Heart right ventricle (tissue), 16 donors: ENCODE measurements at regions of chr5 and their contacts with region 1.

Region 1: GRCh38 chr5:54663866-54664265 is 146.3 kb downstream of the SNX18 start:
- DNase-seq: peak in 1 of 2 donors; percentile 45
- ATAC-seq: peak in 6 of 8 donors; percentile 48 to 79 (median 61)
- H3K4me3 ChIP-seq: no peak overlapping the region
- H3K27ac ChIP-seq: peak overlapping the region in 1 of 10 donors; percentile 32
- H3K4me1 ChIP-seq: peaks cover 0 to 25% (median 9%) of the 10 kb centered on the region in 9 donors
- H3K27me3 ChIP-seq: no peaks in the 10 kb centered on the region
- CTCF ChIP-seq: no peak

Region 2: GRCh38 chr5:54443270-54443669 is 220.6 kb before region 1 on chr5:
- intact Hi-C with region 1: no loop called
- DNase-seq: peak in 1 of 2 donors; percentile 18
- ATAC-seq: no peak
- H3K4me3 ChIP-seq: no peak overlapping the region
- H3K27ac ChIP-seq: no peak overlapping the region
- H3K4me1 ChIP-seq: peaks cover 0 to 27% (median 14%) of the 10 kb centered on the region in 9 donors
- H3K27me3 ChIP-seq: no peaks in the 10 kb centered on the region
- CTCF ChIP-seq: peak in 8 of 9 donors; percentile 6 to 62 (median 48)

Region 3: DNA sequence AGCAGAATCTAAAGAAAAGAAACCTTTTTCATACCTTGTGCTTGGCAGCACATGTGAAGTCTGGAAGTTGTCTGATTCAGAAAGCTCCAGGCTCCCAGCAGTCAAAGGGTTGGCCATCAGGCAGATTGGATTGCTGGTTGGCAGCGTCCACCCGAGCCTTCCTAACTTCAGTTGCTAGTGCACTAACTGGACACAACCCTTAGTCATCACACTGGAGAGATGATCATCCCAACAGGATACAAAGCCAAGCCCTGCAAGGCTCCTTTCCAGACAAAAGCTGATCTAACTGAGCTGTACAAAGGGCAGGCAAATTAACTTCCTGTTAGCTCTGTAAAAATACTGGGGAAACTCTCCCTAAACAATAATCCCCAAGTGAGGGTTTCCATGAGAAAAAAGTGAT is 39.3 kb after region 1 on chr5:
- intact Hi-C with region 1: loop called in 1 of 10 experiments (anchors 5 kb)
- DNase-seq: peak; percentile 40 to 46
- ATAC-seq: peak; percentile 62 to 82 (median 72)
- H3K4me3 ChIP-seq: no peak overlapping the region
- H3K27ac ChIP-seq: peak overlapping the region in 7 of 10 donors; percentile 7 to 64 (median 47)
- H3K4me1 ChIP-seq: peaks cover 6 to 77% (median 42%) of the 10 kb centered on the region in 9 donors
- H3K27me3 ChIP-seq: no peaks in the 10 kb centered on the region
- CTCF ChIP-seq: no peak

Region 4: GRCh38 chr5:54743997-54744788 is 80.3 kb after region 1 on chr5:
- intact Hi-C with region 1: no loop called
- DNase-seq: no peak
- ATAC-seq: peak in 7 of 8 donors; percentile 41 to 81 (median 71)
- H3K4me3 ChIP-seq: no peak overlapping the region
- H3K27ac ChIP-seq: peak overlapping the region in 8 of 10 donors; percentile 15 to 93 (median 46)
- H3K4me1 ChIP-seq: peaks cover 0 to 45% (median 21%) of the 10 kb centered on the region in 9 donors
- H3K27me3 ChIP-seq: no peaks in the 10 kb centered on the region
- CTCF ChIP-seq: no peak